Activated CD8-positive, alpha-beta T cell treated with anti-CD3 and anti-CD28 coated beads for 36 hours (primary cell): ENCODE measurements at regions of chr9 and their contacts with region 1.

Region 1: DNA sequence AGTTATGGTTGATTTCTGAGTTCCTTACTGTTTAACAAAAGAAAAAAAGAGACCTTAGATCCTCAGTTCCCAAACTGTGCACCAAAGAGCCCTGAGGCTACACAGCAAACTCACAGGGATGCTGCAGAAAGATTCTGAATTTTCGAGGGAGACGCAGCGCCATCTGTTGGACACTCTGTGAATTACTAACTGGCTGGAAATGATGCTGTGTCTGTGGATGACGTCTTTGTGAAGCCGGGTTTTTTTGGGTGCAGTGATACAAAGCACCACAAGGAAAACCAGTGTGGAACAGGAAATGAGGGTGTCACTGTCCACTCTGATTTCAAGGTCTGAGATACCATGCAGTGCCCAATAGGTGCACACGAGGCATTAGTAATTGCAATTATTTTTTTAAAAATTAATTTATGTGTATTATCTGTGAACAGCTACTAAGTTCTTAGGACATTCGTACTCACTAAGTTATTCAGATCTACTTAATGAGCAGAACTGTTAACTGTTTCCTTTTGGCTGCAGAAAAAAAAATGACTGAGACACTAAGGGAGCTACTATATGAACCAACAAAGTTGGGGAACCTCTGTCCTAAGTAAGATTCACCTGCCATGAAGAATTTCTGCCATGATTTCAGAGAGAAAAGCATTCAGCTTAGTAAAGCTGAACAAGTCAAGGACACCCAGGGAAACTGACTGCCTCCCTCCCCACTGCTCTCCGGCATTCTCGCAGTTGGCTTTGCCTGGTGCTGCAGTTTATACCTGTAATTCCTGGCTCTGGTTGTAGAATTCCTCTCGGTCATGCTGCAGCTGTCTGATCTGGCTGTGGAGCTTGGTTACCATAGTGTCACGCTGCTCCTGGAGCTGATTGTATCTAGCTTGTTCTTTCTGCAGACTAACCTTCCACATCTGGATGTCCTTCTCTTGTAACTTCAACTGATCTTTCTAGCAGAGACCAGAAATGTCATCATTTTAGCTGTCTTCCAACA is 23.4 kb downstream of the SPACA9 start:
- DNase-seq: peak; percentile 91
- ATAC-seq: peak; percentile 99
- H3K4me3 Mint-ChIP-seq: no peak overlapping the region
- H3K27ac Mint-ChIP-seq: no peak overlapping the region
- H3K4me1 Mint-ChIP-seq: peaks cover 10% of the 10 kb centered on the region
- H3K27me3 Mint-ChIP-seq: no peaks in the 10 kb centered on the region
- CTCF ChIP-seq: peak; percentile 96

Region 2: GRCh38 chr9:132800038-132800648 is 102.0 kb before region 1 on chr9:
- CTCF ChIA-PET with region 1: interaction called, 10 read pairs
- POLR2A ChIA-PET with region 1: no interaction called
- intact Hi-C with region 1: no loop called
- DNase-seq: peak; percentile 73
- ATAC-seq: peak; percentile 94
- H3K4me3 Mint-ChIP-seq: no peak overlapping the region
- H3K27ac Mint-ChIP-seq: no peak overlapping the region
- H3K4me1 Mint-ChIP-seq: peaks cover 2% of the 10 kb centered on the region
- H3K27me3 Mint-ChIP-seq: peaks cover 16% of the 10 kb centered on the region
- CTCF ChIP-seq: peak; percentile 96

Region 3: DNA sequence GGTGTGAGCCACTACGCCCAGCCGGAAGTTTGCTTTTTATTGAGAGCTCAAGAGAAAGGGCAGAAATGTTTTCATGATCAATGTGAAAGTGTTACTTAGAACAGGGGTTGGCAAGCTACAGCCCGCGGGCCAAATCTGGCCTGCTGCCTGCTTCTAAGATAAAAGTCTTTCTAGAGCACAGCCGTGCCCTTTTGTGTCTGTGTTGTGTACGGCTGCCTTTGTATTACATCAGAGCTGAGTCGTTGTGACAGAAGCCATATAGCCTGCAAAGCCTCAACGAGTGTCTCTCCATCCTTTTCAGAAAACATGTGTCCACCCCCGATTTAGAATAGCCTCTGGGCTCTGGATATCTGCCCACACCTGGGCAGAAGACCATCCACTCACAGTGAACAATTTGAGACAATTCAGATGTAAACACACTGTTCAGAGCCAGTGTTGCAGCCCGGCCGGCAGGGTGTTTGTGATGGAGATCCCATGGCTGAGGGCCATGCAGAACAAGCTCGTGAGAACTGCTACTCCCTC is 52.9 kb before region 1 on chr9:
- CTCF ChIA-PET with region 1: interaction called, 27 read pairs
- POLR2A ChIA-PET with region 1: no interaction called
- intact Hi-C with region 1: no loop called
- DNase-seq: peak; percentile 51
- ATAC-seq: peak; percentile 38
- H3K4me3 Mint-ChIP-seq: peak overlapping the region; percentile 54
- H3K27ac Mint-ChIP-seq: peak overlapping the region; percentile 81
- H3K4me1 Mint-ChIP-seq: peaks cover 23% of the 10 kb centered on the region
- H3K27me3 Mint-ChIP-seq: no peaks in the 10 kb centered on the region
- CTCF ChIP-seq: no peak

Region 4: GRCh38 chr9:132877824-132878694 is 24.1 kb before region 1 on chr9 and contains the start of gene AK8:
- CTCF ChIA-PET with region 1: interaction called, 10 read pairs
- POLR2A ChIA-PET with region 1: interaction called, 3 read pairs
- intact Hi-C with region 1: no loop called
- DNase-seq: peak; percentile 76
- ATAC-seq: peak; percentile 78
- H3K4me3 Mint-ChIP-seq: peak within 1 kb of the TSS; percentile 72
- H3K27ac Mint-ChIP-seq: peak within 1 kb of the TSS; percentile 57
- H3K4me1 Mint-ChIP-seq: peaks cover 19% of the 10 kb centered on the region
- H3K27me3 Mint-ChIP-seq: no peaks in the 10 kb centered on the region
- CTCF ChIP-seq: no peak
- total RNA-seq, gene AK8: not detected

Region 5: GRCh38 chr9:132919614-132920268 is 17.6 kb after region 1 on chr9:
- CTCF ChIA-PET with region 1: interaction called, 34 read pairs
- POLR2A ChIA-PET with region 1: interaction called, 5 read pairs
- intact Hi-C with region 1: no loop called
- DNase-seq: no peak
- ATAC-seq: no peak
- H3K4me3 Mint-ChIP-seq: no peak overlapping the region
- H3K27ac Mint-ChIP-seq: no peak overlapping the region
- H3K4me1 Mint-ChIP-seq: no peaks in the 10 kb centered on the region
- H3K27me3 Mint-ChIP-seq: no peaks in the 10 kb centered on the region
- CTCF ChIP-seq: no peak

Region 6: GRCh38 chr9:132970324-132971062 is 68.3 kb after region 1 on chr9:
- CTCF ChIA-PET with region 1: interaction called, 10 read pairs
- POLR2A ChIA-PET with region 1: no interaction called
- intact Hi-C with region 1: no loop called
- DNase-seq: no peak
- ATAC-seq: no peak
- H3K4me3 Mint-ChIP-seq: no peak overlapping the region
- H3K27ac Mint-ChIP-seq: no peak overlapping the region
- H3K4me1 Mint-ChIP-seq: peaks cover 3% of the 10 kb centered on the region
- H3K27me3 Mint-ChIP-seq: peaks cover 5% of the 10 kb centered on the region
- CTCF ChIP-seq: no peak

Region 7: GRCh38 chr9:133067821-133068220 is 165.7 kb after region 1 on chr9:
- CTCF ChIA-PET with region 1: no interaction called
- POLR2A ChIA-PET with region 1: no interaction called
- intact Hi-C with region 1: no loop called
- DNase-seq: no peak
- ATAC-seq: no peak
- H3K4me3 Mint-ChIP-seq: no peak overlapping the region
- H3K27ac Mint-ChIP-seq: no peak overlapping the region
- H3K4me1 Mint-ChIP-seq: peaks cover 2% of the 10 kb centered on the region
- H3K27me3 Mint-ChIP-seq: no peaks in the 10 kb centered on the region
- CTCF ChIP-seq: no peak